AG04449 (cell line): ENCODE measurements at regions of chr17 and their contacts with region 1.

Region 1: GRCh38 chr17:30093463-30094147 is 23.0 kb upstream of the NSRP1 start:
- DNase-seq: no peak
- H3K4me3 ChIP-seq: no peak overlapping the region
- CTCF ChIP-seq: peak; percentile 41

Region 2: GRCh38 chr17:29579866-29580771 is 513.5 kb before region 1 on chr17:
- CTCF ChIA-PET with region 1: interaction called, 43 read pairs
- POLR2A ChIA-PET with region 1: no interaction called
- DNase-seq: no peak
- H3K4me3 ChIP-seq: no peak overlapping the region
- CTCF ChIP-seq: peak; percentile 95

Region 3: GRCh38 chr17:29807520-29808351 is 285.9 kb before region 1 on chr17:
- CTCF ChIA-PET with region 1: interaction called, 131 read pairs
- POLR2A ChIA-PET with region 1: no interaction called
- DNase-seq: no peak
- H3K4me3 ChIP-seq: no peak overlapping the region
- CTCF ChIP-seq: peak; percentile 67

Region 4: DNA sequence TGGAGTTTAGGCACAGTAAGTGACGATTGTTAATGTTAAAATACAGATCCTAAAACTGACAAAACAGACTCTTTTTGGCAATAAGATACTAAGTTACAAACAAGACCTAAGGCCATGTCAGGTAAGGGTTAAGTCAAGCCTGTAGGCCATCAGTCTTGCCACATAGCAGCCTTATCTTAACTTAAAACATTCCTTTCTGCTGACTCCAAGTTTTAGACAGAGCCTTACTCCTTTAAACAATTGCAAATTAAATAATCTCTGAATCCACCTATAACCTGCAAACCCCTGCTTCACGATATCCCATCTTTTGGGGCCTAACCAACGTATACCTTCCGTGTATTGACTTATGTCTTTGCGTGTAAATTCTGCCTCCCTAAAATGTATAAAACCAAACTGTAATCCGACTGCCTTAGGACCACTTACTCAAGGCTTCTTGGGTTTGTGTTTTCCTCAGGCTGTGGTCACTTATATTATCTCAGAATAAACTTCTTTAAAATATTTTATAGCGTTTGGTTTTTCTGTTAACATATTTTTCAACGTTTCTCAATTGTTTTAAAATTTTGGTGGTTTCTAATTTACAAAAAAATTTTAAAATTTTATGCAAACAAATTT is 87.8 kb before region 1 on chr17:
- CTCF ChIA-PET with region 1: interaction called, 30 read pairs
- POLR2A ChIA-PET with region 1: no interaction called
- DNase-seq: no peak
- H3K4me3 ChIP-seq: no peak overlapping the region
- CTCF ChIP-seq: no peak

Region 5: GRCh38 chr17:30041551-30041950 is 52.1 kb before region 1 on chr17:
- CTCF ChIA-PET with region 1: interaction called, 21 read pairs
- POLR2A ChIA-PET with region 1: no interaction called
- DNase-seq: no peak
- H3K4me3 ChIP-seq: no peak overlapping the region
- CTCF ChIP-seq: no peak

Region 6: DNA sequence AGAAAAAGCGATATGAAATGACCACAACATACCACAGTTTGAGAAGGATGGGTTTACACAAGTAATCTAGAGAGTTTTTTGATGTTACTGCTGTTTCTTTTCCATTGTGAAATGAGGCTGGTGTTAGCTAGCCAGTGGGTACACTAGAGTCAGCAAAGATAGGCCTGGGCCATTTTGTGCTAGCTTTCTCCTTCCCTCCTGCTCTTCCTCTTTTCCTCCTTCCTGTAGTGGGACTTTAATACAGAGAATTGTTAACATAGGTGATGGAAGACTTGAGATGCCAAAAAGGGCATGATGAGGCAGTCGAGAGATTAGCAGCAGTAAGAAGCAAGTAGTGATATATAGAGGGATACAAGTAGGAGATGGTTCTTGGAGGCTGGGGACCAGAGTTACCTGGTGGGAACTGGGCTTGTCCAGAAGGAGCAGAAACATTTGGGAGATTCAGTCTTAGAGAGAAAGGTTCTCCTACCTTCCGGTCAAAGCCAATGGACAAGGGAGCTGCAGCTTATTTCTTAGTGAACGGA is 30.7 kb after region 1 on chr17:
- CTCF ChIA-PET with region 1: interaction called, 17 read pairs
- POLR2A ChIA-PET with region 1: no interaction called
- DNase-seq: no peak
- H3K4me3 ChIP-seq: no peak overlapping the region
- CTCF ChIP-seq: no peak